GM12878 (cell line): ENCODE measurements at regions of chr11 and their contacts with region 1.

Region 1: GRCh38 chr11:4044976-4045646 is 49.5 kb upstream of the RRM1 start:
- DNase-seq: no peak
- ATAC-seq: no peak; the same call in 2 of the 3 replicates
- H3K4me3 ChIP-seq: no peak overlapping the region
- H3K27ac ChIP-seq: no peak overlapping the region
- H3K4me1 ChIP-seq: no peaks in the 10 kb centered on the region
- H3K27me3 ChIP-seq: no peaks in the 10 kb centered on the region
- CTCF ChIP-seq: no peak
- EP300 ChIP-seq: no peak
- POLR2A ChIP-seq: no peak
- RAD21 ChIP-seq: no peak

Region 2: GRCh38 chr11:4060182-4060923 is 15.2 kb after region 1 on chr11:
- CTCF ChIA-PET with region 1: interaction called, 6 read pairs
- POLR2A ChIA-PET with region 1: interaction called, 3 read pairs
- RAD21 ChIA-PET with region 1: no interaction called
- SMC1A ChIA-PET with region 1: interaction called, 22 read pairs
- in situ Hi-C with region 1: no loop called
- intact Hi-C with region 1: no loop called
- DNase-seq: no peak
- ATAC-seq: no peak
- H3K4me3 ChIP-seq: no peak overlapping the region
- H3K27ac ChIP-seq: no peak overlapping the region
- H3K4me1 ChIP-seq: peaks cover 19% of the 10 kb centered on the region
- H3K27me3 ChIP-seq: no peaks in the 10 kb centered on the region
- CTCF ChIP-seq: no peak
- EP300 ChIP-seq: no peak
- POLR2A ChIP-seq: no peak
- RAD21 ChIP-seq: no peak